ENCODE measurements at regions of chr13 and their contacts with region 1.

Region 1: GRCh38 chr13:28273919-28274318 is 135.6 kb downstream of the PAN3 start:
- DNase-seq: peak; percentile 40
- H3K4me3 ChIP-seq: no peak overlapping the region
- H3K27ac ChIP-seq: no peak overlapping the region
- H3K4me1 ChIP-seq: peaks cover 33% of the 10 kb centered on the region
- CTCF ChIP-seq: peak; percentile 66

Region 2: GRCh38 chr13:28058866-28059624 is 214.9 kb before region 1 on chr13:
- CTCF ChIA-PET with region 1: no interaction called
- POLR2A ChIA-PET with region 1: no interaction called
- intact Hi-C with region 1: loop called (anchors 2 kb)
- DNase-seq: peak; percentile 42
- H3K4me3 ChIP-seq: no peak overlapping the region
- H3K27ac ChIP-seq: no peak overlapping the region
- H3K4me1 ChIP-seq: no peaks in the 10 kb centered on the region
- CTCF ChIP-seq: peak; percentile 67

Region 3: GRCh38 chr13:28741084-28741491 is 467.2 kb after region 1 on chr13:
- CTCF ChIA-PET with region 1: no interaction called
- POLR2A ChIA-PET with region 1: no interaction called
- intact Hi-C with region 1: no loop called
- DNase-seq: no peak
- H3K4me3 ChIP-seq: no peak overlapping the region
- H3K27ac ChIP-seq: no peak overlapping the region
- H3K4me1 ChIP-seq: no peaks in the 10 kb centered on the region
- CTCF ChIP-seq: no peak

Measured in OCI-LY7 (cell line).